HepG2 (cell line): ENCODE measurements at regions of chr4 and their contacts with region 1.

Region 1: DNA sequence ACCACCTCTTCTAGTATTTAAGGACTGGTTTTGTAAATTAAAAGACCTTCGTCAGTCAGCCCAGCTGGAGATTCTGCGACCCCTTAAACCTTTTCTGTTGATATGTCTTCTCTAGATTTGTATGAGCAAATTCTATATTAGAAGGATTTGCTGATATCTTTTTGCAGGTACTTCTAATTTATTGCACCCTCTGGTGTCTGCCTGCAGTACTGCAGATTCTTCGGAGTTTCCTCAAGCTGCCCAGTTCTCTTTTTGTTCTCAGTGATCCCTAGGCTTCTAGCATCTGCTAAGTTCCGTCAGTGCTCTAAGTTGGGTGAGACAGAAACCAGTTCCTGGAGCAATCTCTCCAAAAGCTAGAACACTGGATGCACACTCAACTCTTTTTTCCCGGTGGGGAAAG is 545.2 kb downstream of the C4orf33 start:
- DNase-seq: peak; percentile 16
- ATAC-seq: peak; percentile 48
- H3K4me3 ChIP-seq: no peak overlapping the region
- H3K27ac ChIP-seq: no peak overlapping the region
- H3K4me1 ChIP-seq: no peaks in the 10 kb centered on the region
- H3K27me3 ChIP-seq: no peaks in the 10 kb centered on the region
- CTCF ChIP-seq: peak; percentile 63
- EP300 ChIP-seq: no peak
- POLR2A ChIP-seq: no peak
- RAD21 ChIP-seq: no peak

Region 2: DNA sequence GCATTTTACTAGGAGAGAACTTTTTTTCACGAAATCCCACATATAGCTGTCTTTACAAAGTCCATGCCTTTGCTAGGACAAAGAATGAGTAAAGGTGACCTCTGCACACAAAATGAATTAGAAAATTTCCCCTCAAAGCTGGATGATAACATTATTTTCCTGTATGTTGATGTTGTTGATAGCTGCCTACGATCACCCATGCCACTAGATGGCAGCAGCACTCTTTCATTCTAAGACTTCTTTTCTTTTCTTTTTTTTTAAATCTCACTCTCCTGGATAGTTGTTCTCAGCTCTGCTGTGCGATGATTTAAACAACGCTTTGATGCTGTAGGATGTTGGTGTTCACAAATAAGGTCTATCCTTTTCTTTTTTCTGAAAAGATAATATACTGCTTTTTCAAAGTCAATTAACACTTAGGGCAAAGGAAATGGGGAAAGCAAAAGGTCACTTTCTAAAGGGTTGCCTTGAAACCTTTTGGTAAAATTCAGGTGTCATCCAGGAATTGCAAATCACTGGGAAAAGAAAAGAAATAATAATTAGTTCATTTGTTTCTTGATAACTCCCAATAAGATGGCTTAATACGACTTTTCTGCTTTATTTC is 278.4 kb before region 1 on chr4:
- CTCF ChIA-PET with region 1: interaction called, 32 read pairs
- POLR2A ChIA-PET with region 1: interaction called, 3 read pairs
- in situ Hi-C with region 1: loop called (anchors 5 kb)
- intact Hi-C with region 1: loop called (anchors 1 kb)
- DNase-seq: peak; percentile 50
- ATAC-seq: peak; percentile 67
- H3K4me3 ChIP-seq: no peak overlapping the region
- H3K27ac ChIP-seq: no peak overlapping the region
- H3K4me1 ChIP-seq: no peaks in the 10 kb centered on the region
- H3K27me3 ChIP-seq: peaks cover 0 to 5% of the 10 kb centered on the region in 2 experiments; a peak in 1 of 5 replicates
- CTCF ChIP-seq: peak; percentile 78
- EP300 ChIP-seq: no peak
- POLR2A ChIP-seq: no peak
- RAD21 ChIP-seq: 0 out of 2 replicates have a peak, but pooled peaks have one; percentile 16

Region 3: GRCh38 chr4:129526814-129527213 is 114.4 kb before region 1 on chr4:
- CTCF ChIA-PET with region 1: interaction called, 11 read pairs
- POLR2A ChIA-PET with region 1: no interaction called
- in situ Hi-C with region 1: loop called (anchors 5 kb)
- intact Hi-C with region 1: loop called (anchors 1 kb)
- DNase-seq: peak; percentile 8
- ATAC-seq: no peak
- H3K4me3 ChIP-seq: no peak overlapping the region
- H3K27ac ChIP-seq: no peak overlapping the region
- H3K4me1 ChIP-seq: no peaks in the 10 kb centered on the region
- H3K27me3 ChIP-seq: no peaks in the 10 kb centered on the region; a peak in 1 of 5 replicates
- CTCF ChIP-seq: peak; percentile 41
- EP300 ChIP-seq: no peak
- POLR2A ChIP-seq: no peak
- RAD21 ChIP-seq: no peak

Region 4: GRCh38 chr4:129614611-129615010 is 26.6 kb before region 1 on chr4:
- CTCF ChIA-PET with region 1: no interaction called
- POLR2A ChIA-PET with region 1: no interaction called
- in situ Hi-C with region 1: no loop called
- intact Hi-C with region 1: no loop called
- DNase-seq: no peak
- ATAC-seq: no peak
- H3K4me3 ChIP-seq: no peak overlapping the region
- H3K27ac ChIP-seq: no peak overlapping the region
- H3K4me1 ChIP-seq: no peaks in the 10 kb centered on the region
- H3K27me3 ChIP-seq: no peaks in the 10 kb centered on the region
- CTCF ChIP-seq: no peak
- EP300 ChIP-seq: no peak
- POLR2A ChIP-seq: no peak
- RAD21 ChIP-seq: no peak